CD4-positive, alpha-beta T cell (primary cell): ENCODE measurements at regions of chr17 and their contacts with region 1.

Region 1: GRCh38 chr17:17141860-17142552 is 64.1 kb downstream of the PLD6 start:
- DNase-seq: peak; percentile 29 to 80 (median 52)
- ATAC-seq: peak; percentile 89
- H3K4me3 ChIP-seq: no peak overlapping the region
- H3K4me3 Mint-ChIP-seq: no peak overlapping the region
- H3K27ac ChIP-seq: no peak overlapping the region
- H3K27ac Mint-ChIP-seq: peak overlapping the region; percentile 53
- H3K4me1 ChIP-seq: peaks cover 26% of the 10 kb centered on the region
- H3K4me1 Mint-ChIP-seq: peaks cover 7% of the 10 kb centered on the region
- H3K27me3 ChIP-seq: no peaks in the 10 kb centered on the region
- H3K27me3 Mint-ChIP-seq: no peaks in the 10 kb centered on the region
- CTCF ChIP-seq: peak; percentile 69

Region 2: GRCh38 chr17:17001874-17002520 is 140.0 kb before region 1 on chr17:
- CTCF ChIA-PET with region 1: no interaction called
- POLR2A ChIA-PET with region 1: no interaction called
- intact Hi-C with region 1: loop called in 1 of 2 experiments (anchors 2 kb)
- DNase-seq: peak; percentile 54 to 87 (median 74)
- ATAC-seq: peak; percentile 97
- H3K4me3 ChIP-seq: no peak overlapping the region
- H3K4me3 Mint-ChIP-seq: no peak overlapping the region
- H3K27ac ChIP-seq: no peak overlapping the region
- H3K27ac Mint-ChIP-seq: no peak overlapping the region
- H3K4me1 ChIP-seq: peaks cover 16% of the 10 kb centered on the region
- H3K4me1 Mint-ChIP-seq: peaks cover 5% of the 10 kb centered on the region
- H3K27me3 ChIP-seq: no peaks in the 10 kb centered on the region
- H3K27me3 Mint-ChIP-seq: no peaks in the 10 kb centered on the region
- CTCF ChIP-seq: peak; percentile 96

Region 3: GRCh38 chr17:17313350-17313991 is 171.5 kb after region 1 on chr17:
- CTCF ChIA-PET with region 1: interaction called, 6 read pairs
- POLR2A ChIA-PET with region 1: no interaction called
- intact Hi-C with region 1: loop called (anchors 1 kb)
- DNase-seq: peak; percentile 66 to 87 (median 70)
- ATAC-seq: peak; percentile 99
- H3K4me3 ChIP-seq: no peak overlapping the region
- H3K4me3 Mint-ChIP-seq: no peak overlapping the region
- H3K27ac ChIP-seq: no peak overlapping the region
- H3K27ac Mint-ChIP-seq: no peak overlapping the region
- H3K4me1 ChIP-seq: peaks cover 6% of the 10 kb centered on the region
- H3K4me1 Mint-ChIP-seq: peaks cover 6% of the 10 kb centered on the region
- H3K27me3 ChIP-seq: no peaks in the 10 kb centered on the region
- H3K27me3 Mint-ChIP-seq: no peaks in the 10 kb centered on the region
- CTCF ChIP-seq: peak; percentile 81